Cardiac septum (tissue), 1 donor: ENCODE measurements at regions of chr3 and their contacts with region 1.

Region 1: DNA sequence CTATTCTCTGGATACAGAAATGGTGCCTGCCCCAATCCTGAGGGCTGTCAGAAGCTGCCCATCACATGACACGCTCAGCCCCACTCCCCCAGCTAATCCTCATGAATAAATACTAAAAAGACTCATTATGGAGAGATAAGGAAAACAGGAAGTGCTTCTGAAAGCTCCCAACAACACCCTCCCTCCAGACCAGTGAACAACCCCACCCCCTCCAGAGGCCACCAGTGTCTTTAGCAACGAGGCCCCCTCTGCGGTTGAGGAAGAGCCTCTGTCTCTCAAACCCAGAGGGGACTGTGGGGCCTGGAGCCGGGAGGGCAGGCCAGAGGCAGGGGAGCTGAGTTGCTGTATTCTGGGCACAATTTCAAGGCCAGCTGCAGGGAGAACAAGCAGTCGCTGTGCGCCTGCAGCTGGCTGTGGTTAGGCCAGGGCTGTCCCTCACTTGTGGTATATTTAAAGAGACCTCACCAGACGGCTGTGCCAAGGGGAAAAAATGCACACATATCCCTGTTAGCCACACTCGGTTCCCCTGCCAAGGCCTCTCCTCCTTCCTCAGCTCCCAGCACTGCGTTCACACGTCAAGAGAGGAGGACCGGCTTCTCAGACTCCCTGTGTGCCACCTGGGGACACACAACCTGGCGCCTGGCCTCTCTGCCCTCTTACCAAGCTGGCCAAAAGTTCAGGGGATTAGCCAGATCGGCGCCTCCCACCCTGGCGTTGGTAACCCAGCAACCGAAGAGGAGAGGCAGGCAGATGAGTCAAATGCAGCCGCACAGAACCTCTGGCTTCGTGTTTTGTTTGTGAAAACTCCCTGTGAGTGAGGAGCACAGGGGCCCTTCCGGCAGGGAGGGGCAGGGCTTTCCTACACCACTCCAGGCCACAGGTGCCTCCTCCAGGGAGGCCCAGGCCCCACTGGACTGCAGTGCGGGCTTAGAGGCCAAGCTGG is 101.2 kb upstream of the ETV5 start:
- DNase-seq: peak; percentile 77

Region 2: GRCh38 chr3:186097663-186098451 is 112.2 kb before region 1 on chr3:
- intact Hi-C with region 1: loop called (anchors 5 kb)
- DNase-seq: no peak

Region 3: GRCh38 chr3:186241910-186242821 is 32.1 kb after region 1 on chr3:
- intact Hi-C with region 1: no loop called
- DNase-seq: peak; percentile 84